Head of caudate nucleus (tissue), 42 donors: ENCODE measurements at regions of chr2 and their contacts with region 1.

Region 1: DNA sequence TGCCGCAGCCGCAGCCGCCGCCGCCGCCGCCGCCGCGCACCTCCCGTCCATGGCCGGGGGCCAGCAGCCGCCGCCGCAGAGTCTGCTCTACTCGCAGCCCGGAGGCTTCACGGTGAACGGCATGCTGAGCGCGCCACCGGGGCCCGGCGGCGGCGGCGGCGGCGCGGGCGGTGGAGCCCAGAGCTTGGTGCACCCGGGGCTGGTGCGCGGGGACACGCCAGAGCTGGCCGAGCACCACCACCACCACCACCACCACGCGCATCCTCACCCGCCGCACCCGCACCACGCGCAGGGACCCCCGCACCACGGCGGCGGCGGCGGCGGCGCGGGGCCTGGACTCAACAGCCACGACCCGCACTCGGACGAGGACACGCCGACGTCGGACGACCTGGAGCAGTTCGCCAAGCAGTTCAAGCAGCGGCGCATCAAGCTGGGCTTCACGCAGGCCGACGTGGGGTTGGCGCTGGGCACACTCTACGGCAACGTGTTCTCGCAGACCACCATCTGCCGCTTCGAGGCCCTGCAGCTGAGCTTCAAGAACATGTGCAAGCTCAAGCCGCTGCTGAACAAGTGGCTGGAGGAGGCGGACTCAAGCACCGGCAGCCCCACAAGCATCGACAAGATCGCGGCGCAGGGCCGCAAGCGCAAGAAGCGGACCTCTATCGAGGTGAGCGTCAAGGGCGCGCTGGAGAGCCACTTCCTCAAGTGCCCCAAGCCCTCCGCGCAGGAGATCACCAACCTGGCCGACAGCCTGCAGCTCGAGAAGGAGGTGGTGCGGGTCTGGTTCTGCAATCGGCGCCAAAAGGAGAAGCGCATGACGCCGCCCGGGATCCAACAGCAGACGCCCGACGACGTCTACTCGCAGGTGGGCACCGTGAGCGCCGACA is 2.4 kb downstream of the POU3F3 start:
- DNase-seq: peak in 21 of 42 donors; percentile 12 to 73 (median 50)

Region 2: GRCh38 chr2:104049981-104050380 is 806.3 kb before region 1 on chr2:
- intact Hi-C with region 1: loop called (anchors 5 kb)
- DNase-seq: no peak

Region 3: GRCh38 chr2:104088745-104089144 is 767.6 kb before region 1 on chr2:
- intact Hi-C with region 1: no loop called
- DNase-seq: no peak

Region 4: DNA sequence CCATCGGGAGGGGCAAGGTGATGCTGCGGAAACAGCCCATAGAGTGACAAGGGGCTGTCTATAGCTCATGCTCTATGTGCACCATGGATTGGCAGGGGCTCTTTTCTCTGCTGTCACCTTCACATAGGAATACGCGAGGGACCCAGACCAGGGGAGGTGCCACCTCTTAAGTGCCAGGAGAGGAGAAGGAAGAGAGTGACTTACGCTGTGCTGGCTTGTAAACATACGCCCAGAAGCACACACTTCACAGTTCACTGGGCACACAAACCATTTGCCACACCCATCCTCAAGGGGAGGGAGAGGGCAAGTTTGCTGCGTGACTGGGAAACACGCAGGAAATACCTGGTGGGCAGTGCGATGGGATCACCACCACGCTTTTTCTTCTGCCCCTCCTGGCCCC is 320.1 kb after region 1 on chr2:
- intact Hi-C with region 1: no loop called
- DNase-seq: no peak